ENCODE measurements at regions of chr22 and their contacts with region 1.

Region 1: DNA sequence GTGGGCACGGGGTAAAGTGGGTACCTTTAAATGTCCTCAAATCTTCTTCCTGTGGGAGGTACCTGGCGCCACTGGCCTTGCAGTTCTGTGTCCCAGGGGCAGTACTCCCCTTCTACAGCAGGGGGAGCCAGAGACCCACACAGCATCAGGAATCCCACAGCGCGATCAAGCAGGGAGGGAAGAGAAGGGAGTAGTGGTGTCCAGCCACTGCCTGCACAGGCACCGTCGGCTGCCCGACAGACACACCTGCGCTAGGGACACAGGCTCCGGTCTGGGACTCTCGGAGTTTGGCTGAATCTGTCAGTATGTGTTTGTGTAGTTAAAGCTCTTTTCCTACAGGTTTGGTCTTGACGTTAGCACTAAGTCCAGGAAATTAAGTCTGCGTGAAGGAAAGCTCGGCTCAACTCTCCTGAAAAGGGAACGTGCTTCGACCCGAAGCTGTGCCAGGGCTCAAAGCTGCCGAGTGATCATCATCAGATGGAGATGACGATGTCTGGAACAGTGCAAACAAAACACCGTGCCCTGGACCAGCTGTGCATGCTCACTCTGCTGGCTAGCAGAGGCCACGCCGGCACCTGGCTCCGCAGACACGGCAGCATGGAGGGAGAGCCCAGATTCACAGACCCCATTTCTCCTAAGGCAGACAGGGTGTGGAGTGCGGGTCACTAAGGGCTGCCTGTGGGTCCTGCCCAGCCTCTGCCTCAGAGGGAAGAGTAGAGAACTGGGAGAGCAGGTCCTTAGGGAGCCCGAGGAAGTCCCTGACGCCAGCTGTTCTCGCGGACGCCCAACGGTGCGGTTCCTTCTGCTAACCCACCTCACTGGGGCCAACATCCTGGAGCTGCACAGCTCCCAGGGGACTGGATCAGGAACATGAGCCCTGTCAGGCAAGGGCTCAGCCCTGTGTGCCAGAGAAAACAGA is 56.0 kb upstream of the BID start:
- DNase-seq: peak; percentile 70
- H3K4me3 Mint-ChIP-seq: no peak overlapping the region
- H3K27ac Mint-ChIP-seq: no peak overlapping the region
- H3K4me1 Mint-ChIP-seq: peaks cover 2% of the 10 kb centered on the region
- H3K27me3 Mint-ChIP-seq: no peaks in the 10 kb centered on the region

Region 2: DNA sequence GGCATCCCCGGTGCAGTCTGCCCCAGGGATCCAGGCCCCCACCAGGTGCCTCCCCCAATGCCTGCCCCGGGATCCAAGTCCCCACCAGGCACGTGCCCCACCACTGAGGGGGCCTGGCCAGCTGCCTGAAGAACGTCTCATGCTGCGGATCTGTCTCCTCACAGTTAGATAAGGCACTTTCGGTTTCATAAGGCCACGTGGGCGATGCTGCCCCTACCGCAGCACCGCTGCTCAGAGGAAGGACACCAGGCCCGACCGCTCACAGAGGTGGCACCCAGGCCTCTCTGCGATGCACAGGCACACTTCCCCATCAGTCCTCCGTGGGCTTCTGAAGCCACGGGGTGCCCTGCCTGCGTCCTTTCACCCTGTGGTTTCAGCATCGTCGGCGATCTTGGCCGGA is 12.1 kb after region 1 on chr22:
- intact Hi-C with region 1: no loop called
- DNase-seq: peak; percentile 19
- H3K4me3 Mint-ChIP-seq: no peak overlapping the region
- H3K27ac Mint-ChIP-seq: no peak overlapping the region
- H3K4me1 Mint-ChIP-seq: peaks cover 3% of the 10 kb centered on the region
- H3K27me3 Mint-ChIP-seq: no peaks in the 10 kb centered on the region

Region 3: DNA sequence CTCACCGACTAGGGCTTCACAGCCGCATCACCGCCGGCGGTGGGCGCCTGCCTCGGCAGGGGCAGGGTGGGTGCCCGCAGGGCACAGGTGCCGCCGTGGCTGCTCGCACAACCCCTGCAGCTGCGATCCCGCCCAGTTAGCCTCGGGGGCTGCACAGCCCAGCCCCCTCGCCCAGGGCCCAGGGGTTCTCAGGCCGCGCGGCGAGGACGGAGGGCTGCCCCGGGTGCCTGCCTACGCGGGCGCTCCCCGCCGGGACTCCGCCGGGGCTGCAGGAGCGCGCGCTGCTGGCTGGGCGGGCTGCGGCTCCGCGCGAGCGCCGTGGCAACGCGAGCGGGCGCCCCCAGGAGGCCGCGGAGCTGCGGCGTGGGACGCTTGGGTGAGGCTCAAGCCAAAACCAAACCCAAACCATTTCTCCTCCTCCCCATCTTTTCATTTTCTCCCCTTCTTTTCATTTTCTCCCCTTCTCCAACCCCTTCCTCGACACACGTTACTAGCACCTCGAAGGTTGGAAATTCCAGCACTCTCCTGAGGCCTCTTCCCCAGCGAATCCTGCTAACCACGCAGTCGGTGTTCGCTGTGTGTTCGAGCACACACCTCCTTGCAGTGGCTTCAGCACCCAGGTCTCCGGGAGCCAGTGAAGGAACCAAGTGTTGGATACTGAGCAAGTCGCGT is 194.1 kb after region 1 on chr22 and contains the start of gene MICAL3:
- intact Hi-C with region 1: loop called (anchors 1 kb)
- DNase-seq: peak; percentile 57
- H3K4me3 Mint-ChIP-seq: peak within 1 kb of the TSS; percentile 83
- H3K27ac Mint-ChIP-seq: no peak within 1 kb of the TSS
- H3K4me1 Mint-ChIP-seq: peaks cover 10% of the 10 kb centered on the region
- H3K27me3 Mint-ChIP-seq: peaks cover 55% of the 10 kb centered on the region
- total RNA-seq, gene MICAL3: 40.6 and 41.8 TPM in 2 replicates

Measured in activated T-helper 2 cell treated with anti-CD3 and anti-CD28 coated beads, Interferon-gamma antibody, Interleukin-2, Interleukin-4, amounts not matched to agents 10 μg/mL and 5 μg/mL and 100 μg/mL, durations not matched to agents 14 hours and 24 hours and 36 hours (primary cell).